K562 (cell line): ENCODE measurements at regions of chr19 and their contacts with region 1.

Region 1: DNA sequence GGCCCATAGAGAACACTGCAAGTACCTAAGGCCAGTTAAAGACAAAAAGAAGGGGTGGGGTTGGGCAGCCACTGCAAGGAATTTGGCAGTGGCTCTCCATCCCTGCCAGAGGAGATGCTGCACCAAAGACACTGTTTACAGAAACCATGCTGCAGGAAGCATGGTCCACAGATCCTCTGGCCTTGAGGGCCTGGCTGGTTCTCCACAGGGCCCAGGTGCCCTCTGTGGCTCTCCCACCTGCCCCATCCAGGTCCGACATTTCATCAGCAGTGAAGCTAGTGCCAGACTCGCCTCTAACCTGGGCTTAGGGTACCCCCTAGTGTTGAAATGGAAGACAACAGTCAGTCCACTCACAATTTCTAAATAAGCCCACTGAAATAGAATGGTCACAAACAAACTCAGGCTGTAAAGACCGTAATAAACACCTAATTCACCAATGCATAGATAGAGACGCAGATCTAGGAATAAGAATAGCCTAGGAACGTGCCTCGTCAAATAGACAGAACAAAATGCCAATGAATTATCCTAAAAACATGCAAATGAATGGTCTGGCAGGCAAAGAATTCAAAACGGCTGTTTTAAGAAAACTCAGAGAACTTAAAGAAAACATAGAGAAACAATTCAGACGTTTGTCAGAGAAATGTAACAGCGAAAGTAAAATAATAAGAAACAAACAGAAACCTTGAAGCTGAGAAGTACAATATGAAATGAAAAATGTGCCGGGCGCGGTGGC is 23.3 kb downstream of the LYPD4 start:
- DNase-seq: peak; percentile 64 to 77 (median 68)
- ATAC-seq: peak; percentile 97
- H3K4me3 ChIP-seq: no peak overlapping the region
- H3K27ac ChIP-seq: no peak overlapping the region
- H3K4me1 ChIP-seq: no peaks in the 10 kb centered on the region
- H3K27me3 ChIP-seq: peaks cover 8 to 29% of the 10 kb centered on the region in 2 experiments; a peak in 4 of 5 replicates
- CTCF ChIP-seq: peak; percentile 83 to 91 (median 87)
- EP300 ChIP-seq: no peak
- POLR2A ChIP-seq: no peak
- RAD21 ChIP-seq: peak; percentile 59 to 76

Region 2: DNA sequence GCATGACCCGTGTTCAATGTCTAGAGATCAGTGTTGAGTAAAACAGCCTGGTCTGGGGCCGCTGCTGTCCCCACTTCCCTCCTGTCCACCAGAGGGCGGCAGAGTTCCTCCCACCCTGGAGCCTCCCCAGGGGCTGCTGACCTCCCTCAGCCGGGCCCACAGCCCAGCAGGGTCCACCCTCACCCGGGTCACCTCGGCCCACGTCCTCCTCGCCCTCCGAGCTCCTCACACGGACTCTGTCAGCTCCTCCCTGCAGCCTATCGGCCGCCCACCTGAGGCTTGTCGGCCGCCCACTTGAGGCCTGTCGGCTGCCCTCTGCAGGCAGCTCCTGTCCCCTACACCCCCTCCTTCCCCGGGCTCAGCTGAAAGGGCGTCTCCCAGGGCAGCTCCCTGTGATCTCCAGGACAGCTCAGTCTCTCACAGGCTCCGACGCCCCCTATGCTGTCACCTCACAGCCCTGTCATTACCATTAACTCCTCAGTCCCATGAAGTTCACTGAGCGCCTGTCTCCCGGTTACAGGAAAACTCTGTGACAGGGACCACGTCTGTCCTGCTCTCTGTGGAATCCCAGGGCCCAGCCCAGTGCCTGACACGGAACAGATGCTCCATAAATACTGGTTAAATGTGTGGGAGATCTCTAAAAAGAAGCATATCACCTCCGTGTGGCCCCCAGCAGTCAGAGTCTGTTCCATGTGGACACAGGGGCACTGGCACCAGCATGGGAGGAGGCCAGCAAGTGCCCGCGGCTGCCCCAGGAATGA is 114.2 kb before region 1 on chr19:
- CTCF ChIA-PET with region 1: interaction called, 7 read pairs
- POLR2A ChIA-PET with region 1: interaction called, 3 read pairs
- in situ Hi-C with region 1: no loop called
- intact Hi-C with region 1: loop called (anchors 2 kb)
- DNase-seq: peak; percentile 82 to 94 (median 91)
- ATAC-seq: peak; percentile 99
- H3K4me3 ChIP-seq: peak overlapping the region; percentile 53
- H3K27ac ChIP-seq: no peak overlapping the region
- H3K4me1 ChIP-seq: peaks cover 0 to 7% of the 10 kb centered on the region in 2 experiments; a peak in 2 of 5 replicates
- H3K27me3 ChIP-seq: peaks cover 3 to 11% of the 10 kb centered on the region in 2 experiments; a peak in 3 of 5 replicates
- CTCF ChIP-seq: peak; percentile 83 to 100 (median 97)
- EP300 ChIP-seq: no peak
- POLR2A ChIP-seq: no peak
- RAD21 ChIP-seq: peak; percentile 47 to 64; a peak in 3 of 4 replicates

Region 3: GRCh38 chr19:41753936-41754529 is 67.1 kb before region 1 on chr19:
- CTCF ChIA-PET with region 1: interaction called, 7 read pairs
- POLR2A ChIA-PET with region 1: no interaction called
- in situ Hi-C with region 1: no loop called
- intact Hi-C with region 1: loop called (anchors 1 kb)
- DNase-seq: peak; percentile 24 to 57 (median 26)
- ATAC-seq: peak; percentile 95
- H3K4me3 ChIP-seq: no peak overlapping the region
- H3K27ac ChIP-seq: no peak overlapping the region
- H3K4me1 ChIP-seq: no peaks in the 10 kb centered on the region
- H3K27me3 ChIP-seq: peaks cover 0 to 3% of the 10 kb centered on the region in 2 experiments; a peak in 2 of 5 replicates
- CTCF ChIP-seq: peak; percentile 57 to 84 (median 59)
- EP300 ChIP-seq: no peak
- POLR2A ChIP-seq: no peak
- RAD21 ChIP-seq: no peak

Region 4: GRCh38 chr19:41795031-41795461 is 26.1 kb before region 1 on chr19:
- CTCF ChIA-PET with region 1: interaction called, 16 read pairs
- POLR2A ChIA-PET with region 1: interaction called, 6 read pairs
- in situ Hi-C with region 1: no loop called
- intact Hi-C with region 1: loop called (anchors 2 kb)
- DNase-seq: peak; percentile 18 to 61 (median 35)
- ATAC-seq: peak; percentile 93
- H3K4me3 ChIP-seq: no peak overlapping the region
- H3K27ac ChIP-seq: no peak overlapping the region
- H3K4me1 ChIP-seq: no peaks in the 10 kb centered on the region
- H3K27me3 ChIP-seq: peaks cover 2 to 23% of the 10 kb centered on the region in 2 experiments; a peak in 3 of 5 replicates
- CTCF ChIP-seq: peak; percentile 63 to 83 (median 66)
- EP300 ChIP-seq: no peak
- POLR2A ChIP-seq: no peak
- RAD21 ChIP-seq: no peak

Region 5: GRCh38 chr19:41893899-41894298 is 72.7 kb after region 1 on chr19:
- CTCF ChIA-PET with region 1: no interaction called
- POLR2A ChIA-PET with region 1: no interaction called
- in situ Hi-C with region 1: no loop called
- intact Hi-C with region 1: no loop called
- DNase-seq: peak in 1 of 4 experiments; percentile 41
- ATAC-seq: peak; percentile 68
- H3K4me3 ChIP-seq: no peak overlapping the region
- H3K27ac ChIP-seq: no peak overlapping the region
- H3K4me1 ChIP-seq: peaks cover 0 to 26% of the 10 kb centered on the region in 2 experiments; a peak in 2 of 5 replicates
- H3K27me3 ChIP-seq: no peaks in the 10 kb centered on the region
- CTCF ChIP-seq: peak; percentile 39 to 43 (median 40); a peak in 5 of 6 replicates
- EP300 ChIP-seq: no peak
- POLR2A ChIP-seq: no peak
- RAD21 ChIP-seq: peak in 1 of 2 experiments; percentile 11; a peak in 1 of 4 replicates